Activated T-helper 2 cell treated with anti-CD3 and anti-CD28 coated beads, Interferon-gamma antibody, Interleukin-2, Interleukin-4, amounts not matched to agents 10 μg/mL and 5 μg/mL and 100 μg/mL, durations not matched to agents 14 hours and 24 hours and 36 hours (primary cell): ENCODE measurements at regions of chr7 and their contacts with region 1.

Region 1: DNA sequence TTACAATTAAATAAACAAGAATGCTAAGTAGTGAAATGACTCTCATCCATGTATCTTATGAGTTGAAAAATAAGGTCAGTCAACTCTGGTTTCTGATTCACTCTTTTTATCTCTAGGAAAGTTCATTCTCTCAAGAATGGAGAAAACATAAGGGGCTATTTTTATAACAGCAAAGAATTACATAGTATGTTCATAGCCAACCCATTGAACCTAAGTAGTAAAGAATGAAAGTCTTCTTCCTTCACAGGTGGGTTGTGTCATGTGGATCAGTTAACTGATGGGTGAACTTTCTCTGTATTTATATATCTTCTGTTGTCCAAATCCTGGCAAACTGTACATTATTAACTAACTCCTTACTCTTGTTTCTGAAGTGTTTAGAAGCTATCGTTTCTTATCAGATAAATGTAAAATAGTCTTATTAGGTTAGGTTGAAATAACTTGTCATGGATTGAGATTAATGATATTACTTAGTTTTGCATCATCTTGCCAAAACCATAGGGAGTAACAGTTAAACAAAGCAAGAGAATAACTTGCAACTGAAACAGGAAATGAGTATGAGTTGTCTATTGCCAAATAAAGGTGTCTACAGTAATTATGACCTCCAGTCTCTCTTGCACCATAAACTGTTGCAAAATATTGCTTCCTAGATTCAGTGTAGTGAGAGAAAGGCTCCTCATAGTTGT is 86.8 kb downstream of the ANKRD7 start:
- DNase-seq: no peak
- H3K4me3 Mint-ChIP-seq: no peak overlapping the region
- H3K27ac Mint-ChIP-seq: peak overlapping the region; percentile 75
- H3K4me1 Mint-ChIP-seq: peaks cover 33% of the 10 kb centered on the region
- H3K27me3 Mint-ChIP-seq: peaks cover 5% of the 10 kb centered on the region

Region 2: DNA sequence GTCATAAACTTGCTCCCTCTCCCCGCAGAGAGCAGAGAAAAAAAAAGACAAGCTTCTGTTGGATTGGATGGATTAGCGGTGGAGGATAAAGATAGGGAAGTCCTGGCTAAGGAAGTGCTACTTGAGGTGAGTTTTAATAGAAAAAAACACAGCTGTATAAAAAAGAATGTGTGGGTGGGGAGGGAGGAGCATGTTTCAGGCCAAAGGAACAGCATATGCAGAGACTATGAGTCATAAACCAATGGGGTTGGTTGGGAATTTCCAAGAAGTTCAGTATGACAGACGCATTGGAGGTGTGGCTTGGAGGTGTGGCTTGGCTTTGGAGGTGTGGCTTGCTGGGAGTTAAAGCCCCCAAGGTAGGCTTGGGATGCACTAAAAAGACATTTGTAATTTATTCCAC is 230.3 kb before region 1 on chr7:
- intact Hi-C with region 1: loop called (anchors 5 kb)
- DNase-seq: no peak
- H3K4me3 Mint-ChIP-seq: no peak overlapping the region
- H3K27ac Mint-ChIP-seq: peak overlapping the region; percentile 53
- H3K4me1 Mint-ChIP-seq: peaks cover 26% of the 10 kb centered on the region
- H3K27me3 Mint-ChIP-seq: peaks cover 3% of the 10 kb centered on the region

Region 3: GRCh38 chr7:118245267-118246040 is 65.8 kb before region 1 on chr7:
- intact Hi-C with region 1: loop called (anchors 1 kb)
- DNase-seq: no peak
- H3K4me3 Mint-ChIP-seq: no peak overlapping the region
- H3K27ac Mint-ChIP-seq: no peak overlapping the region
- H3K4me1 Mint-ChIP-seq: peaks cover 15% of the 10 kb centered on the region
- H3K27me3 Mint-ChIP-seq: peaks cover 21% of the 10 kb centered on the region

Region 4: GRCh38 chr7:118324790-118325449 is 13.7 kb after region 1 on chr7:
- intact Hi-C with region 1: loop called (anchors 1 kb)
- DNase-seq: no peak
- H3K4me3 Mint-ChIP-seq: no peak overlapping the region
- H3K27ac Mint-ChIP-seq: no peak overlapping the region
- H3K4me1 Mint-ChIP-seq: peaks cover 26% of the 10 kb centered on the region
- H3K27me3 Mint-ChIP-seq: peaks cover 8% of the 10 kb centered on the region

Region 5: DNA sequence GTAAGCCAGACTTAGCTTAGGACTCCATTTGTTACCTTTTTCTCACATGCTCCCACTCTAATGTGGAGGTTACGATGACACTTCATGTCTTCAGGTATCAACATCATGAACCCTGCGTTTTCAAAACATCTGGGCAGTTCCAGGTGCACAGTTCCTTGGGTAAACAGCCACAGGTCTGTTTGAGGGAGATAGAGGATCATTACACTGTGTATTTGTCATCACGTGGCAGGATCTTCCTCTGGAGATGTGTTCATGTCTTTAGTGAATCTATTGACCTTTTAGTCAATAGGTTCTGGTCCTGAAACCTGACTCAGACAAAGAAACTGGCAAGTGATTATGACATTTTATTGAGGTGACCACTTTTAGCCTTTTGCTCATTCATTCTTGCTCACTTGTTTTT is 58.7 kb after region 1 on chr7:
- intact Hi-C with region 1: loop called (anchors 1 kb)
- DNase-seq: no peak
- H3K4me3 Mint-ChIP-seq: no peak overlapping the region
- H3K27ac Mint-ChIP-seq: no peak overlapping the region
- H3K4me1 Mint-ChIP-seq: peaks cover 3% of the 10 kb centered on the region
- H3K27me3 Mint-ChIP-seq: peaks cover 1% of the 10 kb centered on the region